Activated T-helper 1 cell treated with anti-CD3 and anti-CD28 coated beads, Interleukin-12 subunit alpha, Interleukin-12 subunit beta, Interleukin-2, Interleukin-4 antibody, amounts not matched to agents 30 ng/mL and 10 ng/mL and 1 ng/mL, durations not matched to agents 14 hours and 24 hours and 36 hours (primary cell): ENCODE measurements at regions of chr2 and their contacts with region 1.

Region 1: DNA sequence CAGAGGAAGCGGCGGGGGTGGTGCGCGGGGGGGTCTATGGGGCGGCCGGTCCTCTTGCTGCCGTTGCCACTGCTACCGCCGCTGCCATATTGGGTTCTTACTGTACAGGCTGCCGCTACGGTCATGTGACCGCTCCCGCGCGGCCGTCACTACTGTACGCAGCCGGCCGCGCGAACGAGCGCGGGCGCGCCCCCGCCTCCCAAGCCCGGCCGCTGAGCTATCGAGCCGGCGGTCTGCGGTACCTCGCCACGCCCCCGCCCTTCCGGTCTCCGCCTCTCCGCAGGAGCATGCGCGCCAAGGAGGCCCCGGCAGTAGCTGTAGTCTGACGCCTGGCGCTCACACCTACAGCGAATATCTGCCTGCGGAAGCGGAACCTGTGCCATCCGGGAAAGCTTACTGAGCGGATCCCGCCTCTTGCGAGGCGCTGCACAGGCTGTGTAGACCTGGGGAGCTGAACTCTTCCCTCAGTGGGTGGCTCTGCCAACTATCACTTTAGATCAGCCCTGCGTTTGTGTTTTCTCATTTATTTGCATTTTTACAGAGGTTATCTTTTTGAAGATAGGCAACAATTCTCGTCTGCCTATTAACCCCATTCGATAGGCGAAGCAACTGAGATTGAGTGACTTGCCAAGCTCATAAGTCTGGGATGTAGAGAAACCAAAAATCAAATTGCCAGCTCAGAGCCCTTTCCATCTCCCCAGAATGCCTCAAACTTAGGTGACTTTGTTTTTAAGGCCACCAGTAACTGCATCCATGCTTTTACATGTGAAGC is at the start of gene ASXL2:
- DNase-seq: peak; percentile 98
- H3K4me3 Mint-ChIP-seq: peak within 1 kb of the TSS; percentile 90
- H3K27ac Mint-ChIP-seq: peak within 1 kb of the TSS; percentile 96
- H3K4me1 Mint-ChIP-seq: peaks cover 51% of the 10 kb centered on the region
- H3K27me3 Mint-ChIP-seq: peaks cover 5% of the 10 kb centered on the region
- total RNA-seq, gene ASXL2: 48.9 and 54.4 TPM in 2 replicates

Region 2: DNA sequence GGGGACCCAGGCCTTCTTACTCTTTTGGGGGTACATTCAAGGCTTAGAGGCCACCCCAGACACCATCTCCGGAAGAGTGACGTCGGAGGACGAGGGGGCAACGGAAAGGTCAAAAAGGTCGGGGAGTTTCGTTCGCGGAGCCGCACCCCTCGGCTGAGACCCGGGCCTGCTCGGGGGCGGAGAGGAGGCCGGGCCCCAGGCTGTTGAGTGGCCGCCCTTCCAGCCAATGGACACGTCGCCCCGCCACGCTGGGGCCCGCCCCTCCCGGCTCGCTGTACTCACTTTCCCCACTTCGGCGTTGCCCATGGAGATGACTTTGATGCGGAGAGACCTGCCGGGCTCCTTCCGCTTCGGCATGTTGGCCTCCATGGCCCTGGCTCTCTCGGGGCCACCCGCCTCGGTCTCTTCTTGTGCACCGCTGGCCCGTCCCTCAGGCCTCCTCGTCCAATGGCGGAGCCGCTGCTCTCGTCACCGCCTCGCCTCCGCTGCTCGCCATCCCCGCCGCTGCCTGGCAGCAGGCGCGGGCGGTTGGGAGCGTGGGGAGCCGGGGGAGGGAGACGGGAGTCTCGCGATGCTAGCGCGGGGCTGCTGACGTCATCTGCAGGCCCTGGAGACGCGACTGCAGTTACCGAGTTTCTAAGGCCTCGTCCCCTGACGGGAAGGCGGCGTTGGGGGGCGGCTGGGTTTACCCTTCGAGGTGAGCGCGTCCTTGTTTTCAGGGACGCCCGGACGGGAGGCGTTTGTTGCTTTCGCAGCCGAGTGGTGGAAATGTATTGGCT is 906.8 kb before region 1 on chr2 and contains the start of gene DNAJC27:
- intact Hi-C with region 1: loop called (anchors 5 kb)
- DNase-seq: peak; percentile 96
- H3K4me3 Mint-ChIP-seq: peak within 1 kb of the TSS; percentile 96
- H3K27ac Mint-ChIP-seq: peak within 1 kb of the TSS; percentile 100
- H3K4me1 Mint-ChIP-seq: peaks cover 19% of the 10 kb centered on the region
- H3K27me3 Mint-ChIP-seq: no peaks in the 10 kb centered on the region
- total RNA-seq, gene DNAJC27: 6.3 and 7.0 TPM in 2 replicates

Region 3: GRCh38 chr2:25558262-25558661 is 320.3 kb before region 1 on chr2:
- intact Hi-C with region 1: loop called (anchors 1 kb)
- DNase-seq: peak; percentile 53
- H3K4me3 Mint-ChIP-seq: peak overlapping the region; percentile 46
- H3K27ac Mint-ChIP-seq: peak overlapping the region; percentile 98
- H3K4me1 Mint-ChIP-seq: peaks cover 63% of the 10 kb centered on the region
- H3K27me3 Mint-ChIP-seq: no peaks in the 10 kb centered on the region

Region 4: GRCh38 chr2:25825238-25825637 is 53.3 kb before region 1 on chr2:
- intact Hi-C with region 1: loop called (anchors 1 kb)
- DNase-seq: peak; percentile 26
- H3K4me3 Mint-ChIP-seq: peak overlapping the region; percentile 50
- H3K27ac Mint-ChIP-seq: peak overlapping the region; percentile 69
- H3K4me1 Mint-ChIP-seq: peaks cover 69% of the 10 kb centered on the region
- H3K27me3 Mint-ChIP-seq: no peaks in the 10 kb centered on the region

Region 5: GRCh38 chr2:25867396-25868003 is 11.0 kb before region 1 on chr2:
- intact Hi-C with region 1: loop called (anchors 2 kb)
- DNase-seq: no peak
- H3K4me3 Mint-ChIP-seq: no peak overlapping the region
- H3K27ac Mint-ChIP-seq: no peak overlapping the region
- H3K4me1 Mint-ChIP-seq: peaks cover 10% of the 10 kb centered on the region
- H3K27me3 Mint-ChIP-seq: no peaks in the 10 kb centered on the region

Region 6: GRCh38 chr2:25894135-25894830 is 15.7 kb after region 1 on chr2:
- intact Hi-C with region 1: no loop called
- DNase-seq: no peak
- H3K4me3 Mint-ChIP-seq: no peak overlapping the region
- H3K27ac Mint-ChIP-seq: no peak overlapping the region
- H3K4me1 Mint-ChIP-seq: no peaks in the 10 kb centered on the region
- H3K27me3 Mint-ChIP-seq: peaks cover 1% of the 10 kb centered on the region

Region 7: GRCh38 chr2:25920326-25920725 is 41.8 kb after region 1 on chr2:
- intact Hi-C with region 1: no loop called
- DNase-seq: no peak
- H3K4me3 Mint-ChIP-seq: no peak overlapping the region
- H3K27ac Mint-ChIP-seq: no peak overlapping the region
- H3K4me1 Mint-ChIP-seq: peaks cover 11% of the 10 kb centered on the region
- H3K27me3 Mint-ChIP-seq: peaks cover 11% of the 10 kb centered on the region

Region 8: DNA sequence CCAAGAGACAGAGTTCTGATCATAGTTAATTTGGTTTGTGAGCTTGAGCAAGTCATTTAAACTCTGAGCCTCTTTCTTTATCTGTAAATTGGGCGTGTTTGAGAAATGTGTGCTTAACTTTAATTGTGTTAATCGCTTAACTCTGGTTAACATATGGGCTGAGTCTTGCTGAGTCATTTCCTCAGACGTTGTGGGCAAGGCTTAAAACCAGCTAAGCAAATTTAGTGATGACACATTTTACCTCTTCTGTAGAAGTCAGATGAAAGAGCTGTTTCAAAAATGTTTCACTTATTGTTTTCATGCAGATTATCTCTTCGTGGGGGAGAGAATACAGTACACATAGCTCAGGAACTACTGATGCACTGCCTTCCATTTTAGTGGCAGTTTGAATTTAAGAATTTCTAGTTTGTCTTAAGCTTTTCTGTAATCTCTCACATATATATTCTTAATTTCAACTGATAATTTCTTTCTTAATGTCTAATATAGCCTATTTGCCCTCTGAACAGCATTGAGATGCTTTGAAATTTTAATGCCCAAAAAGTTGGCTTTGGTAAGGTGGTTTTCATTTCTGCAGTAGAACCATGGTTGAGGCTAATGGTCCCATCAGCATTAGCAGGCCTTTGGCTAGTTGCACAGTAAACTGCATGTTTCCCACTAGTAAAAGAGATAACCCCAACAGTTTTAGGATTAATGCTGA is 190.2 kb after region 1 on chr2:
- intact Hi-C with region 1: loop called (anchors 1 kb)
- DNase-seq: peak; percentile 64
- H3K4me3 Mint-ChIP-seq: peak overlapping the region; percentile 27
- H3K27ac Mint-ChIP-seq: peak overlapping the region; percentile 93
- H3K4me1 Mint-ChIP-seq: peaks cover 68% of the 10 kb centered on the region
- H3K27me3 Mint-ChIP-seq: no peaks in the 10 kb centered on the region

Region 9: DNA sequence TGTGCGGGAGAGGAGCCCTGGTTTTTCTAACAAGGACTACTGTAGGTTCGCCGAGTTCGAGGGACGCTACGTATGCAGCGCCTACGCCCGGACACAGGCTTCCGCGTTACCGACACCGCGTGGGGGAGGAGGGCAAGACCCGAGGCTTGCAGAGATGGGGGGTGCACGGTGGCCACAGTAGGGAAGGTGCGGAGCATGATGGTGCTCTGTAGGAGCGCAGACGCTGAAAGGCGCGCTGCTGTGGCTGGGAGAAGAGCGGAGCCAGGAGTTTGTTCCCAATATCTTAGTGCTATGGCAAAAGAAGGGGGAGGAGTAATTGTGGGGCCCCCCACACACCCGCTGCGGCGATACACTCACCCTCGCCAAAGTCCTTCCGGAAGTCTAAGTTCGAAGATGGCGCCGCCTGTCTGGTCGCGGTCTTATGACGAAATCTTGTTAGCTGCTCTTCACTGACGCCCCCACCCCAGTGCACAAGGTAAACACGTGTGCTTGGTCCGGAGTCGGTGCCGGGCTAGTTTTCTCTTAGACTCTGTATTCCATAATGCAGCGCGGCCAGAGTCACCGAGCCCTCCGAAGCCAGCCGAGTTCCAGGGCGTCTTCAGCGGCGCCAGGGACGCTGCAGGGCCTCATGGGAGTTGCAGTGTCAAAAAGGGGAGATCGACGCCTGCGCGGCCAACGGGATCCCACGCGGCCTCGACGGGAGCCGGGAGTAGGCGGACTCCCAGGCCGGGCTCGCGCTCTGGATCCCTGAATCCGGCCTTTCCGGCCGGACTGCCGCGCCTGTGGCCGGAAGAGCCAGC is 1478.0 kb after region 1 on chr2 and contains the start of gene GTF3C2:
- intact Hi-C with region 1: loop called (anchors 5 kb)
- DNase-seq: peak; percentile 89
- H3K4me3 Mint-ChIP-seq: peak within 1 kb of the TSS; percentile 98
- H3K27ac Mint-ChIP-seq: peak within 1 kb of the TSS; percentile 99
- H3K4me1 Mint-ChIP-seq: peaks cover 47% of the 10 kb centered on the region
- H3K27me3 Mint-ChIP-seq: no peaks in the 10 kb centered on the region
- total RNA-seq, gene GTF3C2: 86.3 and 86.6 TPM in 2 replicates